ENCODE measurements at regions of chr10 and their contacts with region 1.

Region 1: GRCh38 chr10:14009371-14010100 is 321.2 kb downstream of the FRMD4A start:
- DNase-seq: peak; percentile 28 to 86 (median 78)
- ATAC-seq: peak; percentile 93
- H3K4me3 ChIP-seq: peak overlapping the region; percentile 44
- H3K4me3 Mint-ChIP-seq: peak overlapping the region; percentile 76 to 94 (median 86)
- H3K27ac ChIP-seq: peak overlapping the region; percentile 66
- H3K27ac Mint-ChIP-seq: peak overlapping the region; percentile 84 to 95 (median 91)
- H3K4me1 ChIP-seq: peaks cover 22 to 28% of the 10 kb centered on the region in 2 donors
- H3K4me1 Mint-ChIP-seq: peaks cover 24 to 75% (median 54%) of the 10 kb centered on the region in 7 donors
- H3K27me3 ChIP-seq: no peaks in the 10 kb centered on the region
- H3K27me3 Mint-ChIP-seq: peaks cover 0 to 30% (median 0%) of the 10 kb centered on the region in 5 donors

Region 2: DNA sequence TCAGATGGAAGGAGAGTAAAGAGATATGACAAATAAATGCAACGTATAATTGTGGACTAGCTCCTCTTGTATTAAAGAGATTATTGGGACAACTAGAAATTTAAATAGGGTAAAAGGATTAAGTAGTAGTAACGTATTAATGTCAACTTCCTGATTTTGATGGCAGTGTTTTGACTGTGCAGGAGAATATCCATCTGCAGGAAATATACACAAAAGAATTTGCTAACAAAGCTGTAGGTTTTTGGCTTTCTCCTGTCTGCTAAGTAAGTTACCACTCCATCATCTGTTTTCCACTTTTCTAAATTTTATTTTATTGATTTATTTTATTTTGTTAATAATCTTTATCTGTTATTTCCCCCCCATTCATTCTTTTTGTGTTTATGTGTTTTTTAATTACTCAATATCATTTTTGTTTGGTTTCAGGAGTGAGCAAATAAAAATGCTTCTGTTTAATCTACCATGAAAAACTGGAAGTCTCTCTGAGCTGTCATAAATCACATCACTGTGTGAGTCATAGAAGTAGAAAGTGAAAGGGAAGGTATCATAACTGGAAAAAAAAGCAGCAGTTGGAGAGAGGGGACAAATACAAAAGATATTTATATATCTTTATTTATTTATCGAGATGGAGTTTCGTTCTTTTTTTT is 452.7 kb before region 1 on chr10:
- CTCF ChIA-PET with region 1: no interaction called
- POLR2A ChIA-PET with region 1: no interaction called
- intact Hi-C with region 1: no loop called
- DNase-seq: no peak
- ATAC-seq: no peak
- H3K4me3 ChIP-seq: no peak overlapping the region
- H3K4me3 Mint-ChIP-seq: no peak overlapping the region
- H3K27ac ChIP-seq: no peak overlapping the region
- H3K27ac Mint-ChIP-seq: no peak overlapping the region
- H3K4me1 ChIP-seq: no peaks in the 10 kb centered on the region
- H3K4me1 Mint-ChIP-seq: peaks cover 0 to 3% (median 0%) of the 10 kb centered on the region in 7 donors
- H3K27me3 ChIP-seq: no peaks in the 10 kb centered on the region
- H3K27me3 Mint-ChIP-seq: peaks cover 12 to 27% (median 17%) of the 10 kb centered on the region in 5 donors

Region 3: DNA sequence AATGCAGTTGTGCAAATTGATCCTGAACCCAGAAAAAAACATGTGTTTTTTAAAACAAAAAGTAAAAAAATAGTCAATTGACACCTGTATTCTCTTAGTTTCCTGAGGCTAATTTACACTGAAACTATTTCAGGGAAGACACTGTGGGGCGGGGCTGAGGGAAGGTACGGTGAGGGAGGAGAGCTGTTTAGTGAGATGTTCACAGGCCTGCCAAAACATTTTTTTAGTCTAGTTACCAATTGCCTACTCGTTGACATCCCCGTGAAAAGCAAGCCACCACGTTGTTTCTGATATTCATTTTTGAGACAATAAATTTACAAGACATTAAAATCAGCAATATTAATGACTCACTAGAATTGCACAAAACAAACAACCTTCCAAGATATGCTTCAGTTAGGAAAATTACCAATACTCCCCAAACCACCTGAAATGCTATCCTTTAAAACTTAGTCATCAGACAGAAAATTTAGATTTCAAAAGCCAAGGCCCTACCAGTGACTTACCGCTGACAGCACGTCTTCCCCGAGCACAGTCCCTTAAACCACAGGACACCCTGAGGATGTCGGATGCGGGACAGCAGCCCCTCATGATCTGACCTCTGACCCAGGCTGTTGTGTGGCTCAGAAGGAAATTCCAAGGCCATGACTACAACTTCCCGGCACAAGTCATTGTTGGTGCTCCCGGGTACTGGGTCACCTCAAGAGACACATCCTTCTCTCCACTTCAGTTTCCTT is 143.6 kb before region 1 on chr10:
- CTCF ChIA-PET with region 1: no interaction called
- POLR2A ChIA-PET with region 1: no interaction called
- intact Hi-C with region 1: loop called in 1 of 2 experiments (anchors 10 kb)
- DNase-seq: no peak
- ATAC-seq: no peak
- H3K4me3 ChIP-seq: no peak overlapping the region
- H3K4me3 Mint-ChIP-seq: no peak overlapping the region
- H3K27ac ChIP-seq: no peak overlapping the region
- H3K27ac Mint-ChIP-seq: peak overlapping the region in 2 of 9 donors; percentile 26 to 56
- H3K4me1 ChIP-seq: peaks cover 0 to 32% of the 10 kb centered on the region in 2 donors
- H3K4me1 Mint-ChIP-seq: peaks cover 0 to 72% (median 47%) of the 10 kb centered on the region in 7 donors
- H3K27me3 ChIP-seq: no peaks in the 10 kb centered on the region
- H3K27me3 Mint-ChIP-seq: peaks cover 0 to 3% (median 0%) of the 10 kb centered on the region in 5 donors

Region 4: DNA sequence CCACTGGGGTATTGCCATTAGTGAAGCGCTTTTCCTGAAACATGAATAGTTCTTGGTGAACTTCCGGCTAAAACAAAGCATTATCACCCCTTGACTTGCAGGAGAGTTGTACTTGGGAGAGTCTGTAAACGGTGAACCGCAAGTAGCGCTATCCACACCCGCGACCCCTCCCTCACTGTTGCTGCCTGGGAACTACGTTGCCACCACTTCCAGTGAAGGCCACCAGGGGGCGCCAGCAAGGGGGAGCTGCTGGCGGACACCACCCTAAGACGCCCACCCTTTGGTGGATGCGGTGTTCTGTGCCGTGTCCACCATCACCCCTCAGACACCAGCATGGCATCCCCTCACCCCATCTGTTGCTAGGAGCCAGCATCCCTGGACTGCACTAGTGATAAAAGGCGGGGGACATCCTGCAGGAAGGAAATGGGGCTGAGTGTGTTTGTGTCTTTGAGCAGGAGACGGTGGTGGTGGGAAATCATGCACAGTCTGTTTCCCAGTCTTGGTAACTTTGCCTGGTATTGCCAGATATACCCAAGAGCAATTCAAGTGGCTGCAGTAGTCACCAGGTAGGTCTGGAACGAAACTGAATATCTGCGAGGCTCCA is 23.0 kb after region 1 on chr10:
- CTCF ChIA-PET with region 1: no interaction called
- POLR2A ChIA-PET with region 1: no interaction called
- intact Hi-C with region 1: loop called in 1 of 2 experiments (anchors 1 kb)
- DNase-seq: peak; percentile 9 to 58 (median 41)
- ATAC-seq: peak; percentile 59
- H3K4me3 ChIP-seq: no peak overlapping the region
- H3K4me3 Mint-ChIP-seq: peak overlapping the region in 3 of 10 donors; percentile 11 to 33 (median 28)
- H3K27ac ChIP-seq: no peak overlapping the region
- H3K27ac Mint-ChIP-seq: peak overlapping the region in 2 of 9 donors; percentile 36 to 57
- H3K4me1 ChIP-seq: peaks cover 0 to 5% of the 10 kb centered on the region in 2 donors
- H3K4me1 Mint-ChIP-seq: peaks cover 2 to 14% (median 10%) of the 10 kb centered on the region in 7 donors
- H3K27me3 ChIP-seq: no peaks in the 10 kb centered on the region
- H3K27me3 Mint-ChIP-seq: peaks cover 0 to 22% (median 0%) of the 10 kb centered on the region in 5 donors

Region 5: GRCh38 chr10:14093730-14094484 is 84.4 kb after region 1 on chr10:
- CTCF ChIA-PET with region 1: no interaction called
- POLR2A ChIA-PET with region 1: no interaction called
- intact Hi-C with region 1: loop called in 1 of 2 experiments (anchors 5 kb)
- DNase-seq: peak in 4 of 9 donors; percentile 6 to 13 (median 12)
- ATAC-seq: no peak
- H3K4me3 ChIP-seq: no peak overlapping the region
- H3K4me3 Mint-ChIP-seq: no peak overlapping the region
- H3K27ac ChIP-seq: no peak overlapping the region
- H3K27ac Mint-ChIP-seq: peak overlapping the region in 1 of 9 donors; percentile 20
- H3K4me1 ChIP-seq: no peaks in the 10 kb centered on the region
- H3K4me1 Mint-ChIP-seq: peaks cover 0 to 13% (median 4%) of the 10 kb centered on the region in 7 donors
- H3K27me3 ChIP-seq: no peaks in the 10 kb centered on the region
- H3K27me3 Mint-ChIP-seq: no peaks in the 10 kb centered on the region

Region 6: DNA sequence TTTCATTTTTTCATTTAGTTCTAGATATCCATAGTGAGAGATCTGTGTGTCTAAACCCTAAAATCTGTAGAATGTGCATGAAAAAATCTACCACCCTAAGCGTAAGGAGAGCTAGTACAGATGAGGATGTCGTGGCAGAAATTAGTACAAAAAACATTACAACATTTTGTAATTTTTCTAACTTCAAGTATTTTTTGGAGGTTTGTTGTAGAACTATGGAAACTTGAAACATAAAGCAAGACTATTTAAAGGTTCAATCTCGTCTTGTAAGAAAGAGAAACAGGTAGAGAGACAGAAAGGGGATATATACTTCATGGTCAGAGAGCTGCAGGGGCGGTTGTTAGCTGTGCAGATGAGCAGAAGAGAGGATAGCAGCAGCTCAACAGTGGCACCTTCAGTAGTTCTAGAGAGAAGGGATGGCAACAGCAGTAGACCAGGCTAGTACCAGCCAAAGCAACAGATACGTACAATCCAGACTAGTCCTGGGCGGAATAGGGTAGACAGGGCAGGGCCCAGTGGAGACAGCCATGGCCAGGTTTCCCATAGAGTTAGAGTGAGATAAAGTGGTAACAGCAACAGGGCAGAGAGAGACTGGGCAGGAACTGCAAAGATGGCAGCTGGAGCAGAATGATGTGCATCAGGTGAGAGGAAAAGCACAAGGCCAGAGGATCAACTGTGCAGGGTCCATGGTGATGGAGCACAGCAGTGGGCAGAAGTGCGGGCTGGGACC is 175.9 kb after region 1 on chr10:
- CTCF ChIA-PET with region 1: no interaction called
- POLR2A ChIA-PET with region 1: no interaction called
- intact Hi-C with region 1: loop called (anchors 2 to 5 kb)
- DNase-seq: peak in 4 of 9 donors; percentile 30 to 75 (median 74)
- ATAC-seq: peak; percentile 87
- H3K4me3 ChIP-seq: peak overlapping the region; percentile 37
- H3K4me3 Mint-ChIP-seq: peak overlapping the region; percentile 18 to 88 (median 77)
- H3K27ac ChIP-seq: peak overlapping the region; percentile 61
- H3K27ac Mint-ChIP-seq: peak overlapping the region; percentile 88 to 98 (median 95)
- H3K4me1 ChIP-seq: peaks cover 0 to 12% of the 10 kb centered on the region in 2 donors
- H3K4me1 Mint-ChIP-seq: peaks cover 12 to 35% (median 22%) of the 10 kb centered on the region in 7 donors
- H3K27me3 ChIP-seq: peaks cover 0 to 5% of the 10 kb centered on the region in 2 donors
- H3K27me3 Mint-ChIP-seq: peaks cover 17 to 69% (median 21%) of the 10 kb centered on the region in 5 donors

Region 7: GRCh38 chr10:14543046-14543903 is 533.7 kb after region 1 on chr10:
- CTCF ChIA-PET with region 1: no interaction called
- POLR2A ChIA-PET with region 1: no interaction called
- intact Hi-C with region 1: no loop called
- DNase-seq: peak in 7 of 9 donors; percentile 60 to 81 (median 73)
- ATAC-seq: peak; percentile 86
- H3K4me3 ChIP-seq: peak overlapping the region; percentile 28
- H3K4me3 Mint-ChIP-seq: peak overlapping the region; percentile 46 to 82 (median 76)
- H3K27ac ChIP-seq: peak overlapping the region; percentile 72
- H3K27ac Mint-ChIP-seq: peak overlapping the region; percentile 73 to 96 (median 84)
- H3K4me1 ChIP-seq: peaks cover 23 to 42% of the 10 kb centered on the region in 2 donors
- H3K4me1 Mint-ChIP-seq: peaks cover 57 to 97% (median 94%) of the 10 kb centered on the region in 7 donors
- H3K27me3 ChIP-seq: no peaks in the 10 kb centered on the region
- H3K27me3 Mint-ChIP-seq: no peaks in the 10 kb centered on the region